Stomach (tissue), 19 donors: ENCODE measurements at regions of chr6 and their contacts with region 1.

Region 1: DNA sequence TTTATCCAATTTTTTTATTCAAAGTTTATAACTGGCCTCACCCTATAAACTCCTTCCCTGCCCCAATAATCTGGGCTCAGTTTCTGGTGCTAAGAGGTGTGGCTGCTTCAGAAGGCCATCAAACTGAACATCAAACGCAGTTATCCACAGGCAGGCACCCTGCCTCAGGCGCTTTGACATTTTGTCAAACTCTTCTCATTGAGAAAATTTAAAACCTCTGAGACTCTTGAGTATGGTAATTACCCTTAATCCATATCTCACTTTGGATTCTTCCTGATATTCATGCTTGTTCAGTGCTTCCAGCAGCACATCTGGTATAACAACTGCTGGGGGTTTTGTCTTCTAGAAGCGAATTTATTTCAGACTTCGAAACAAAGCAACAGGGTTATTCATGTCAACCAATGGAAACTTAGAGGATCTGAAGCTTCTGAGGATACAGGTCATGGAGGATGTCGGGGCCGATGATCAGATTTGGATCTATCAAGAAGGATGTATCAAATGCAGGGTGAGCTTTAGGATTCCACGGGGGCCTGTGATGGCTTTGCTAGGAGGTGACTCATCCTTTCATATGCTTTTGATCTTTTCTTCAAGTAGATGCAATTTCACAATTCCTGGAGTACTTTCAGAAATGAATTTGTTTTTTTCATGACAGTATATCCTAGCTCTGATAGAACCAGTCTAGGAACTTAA is 68.2 kb downstream of the RTN4IP1 start:
- DNase-seq: no peak
- H3K4me3 ChIP-seq: no peak overlapping the region
- H3K27ac ChIP-seq: no peak overlapping the region
- H3K4me1 ChIP-seq: no peaks in the 10 kb centered on the region
- H3K27me3 ChIP-seq: no peaks in the 10 kb centered on the region
- CTCF ChIP-seq: no peak
- EP300 ChIP-seq: no peak
- POLR2A ChIP-seq: no peak

Region 2: GRCh38 chr6:106444777-106445507 is 116.2 kb before region 1 on chr6:
- intact Hi-C with region 1: loop called (anchors 5 kb)
- DNase-seq: peak in 1 of 2 donors; percentile 82
- H3K4me3 ChIP-seq: no peak overlapping the region
- H3K27ac ChIP-seq: no peak overlapping the region
- H3K4me1 ChIP-seq: peaks cover 0 to 7% (median 0%) of the 10 kb centered on the region in 4 donors
- H3K27me3 ChIP-seq: peaks cover 0 to 29% (median 0%) of the 10 kb centered on the region in 3 donors
- CTCF ChIP-seq: peak in 5 of 7 experiments; percentile 57 to 78 (median 69)
- EP300 ChIP-seq: no peak
- POLR2A ChIP-seq: no peak